RWPE1 (cell line): ENCODE measurements at regions of chr15 and their contacts with region 1.

Region 1: GRCh38 chr15:60179786-60180391 is 175.8 kb downstream of the FOXB1 start:
- DNase-seq: peak; percentile 51
- H3K27ac ChIP-seq: no peak overlapping the region
- CTCF ChIP-seq: peak; percentile 92

Region 2: DNA sequence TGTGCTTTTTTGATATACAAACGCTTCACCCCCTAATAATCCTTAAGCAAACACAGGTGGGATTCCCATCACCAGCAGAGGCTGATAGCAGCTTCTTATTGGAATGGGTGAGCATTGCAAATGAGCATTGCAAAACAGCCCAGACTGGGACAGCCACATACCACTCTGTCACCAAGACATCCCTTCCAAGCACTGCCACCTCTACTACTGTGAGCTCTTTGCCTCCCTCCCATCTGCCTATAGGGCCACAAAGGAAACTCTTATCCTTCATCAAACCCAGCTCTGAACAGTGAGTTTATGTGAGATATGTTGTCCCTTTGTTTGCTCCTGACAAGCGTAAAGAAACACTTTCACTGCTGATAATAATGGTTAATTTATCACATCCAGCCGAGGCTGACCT is 71.3 kb after region 1 on chr15:
- CTCF ChIA-PET with region 1: interaction called, 11 read pairs
- POLR2A ChIA-PET with region 1: no interaction called
- DNase-seq: no peak
- H3K27ac ChIP-seq: no peak overlapping the region
- CTCF ChIP-seq: no peak